AG04449 (cell line): ENCODE measurements at regions of chr6 and their contacts with region 1.

Region 1: GRCh38 chr6:138692058-138692977 is 81.3 kb upstream of the CCDC28A start:
- DNase-seq: no peak
- H3K4me3 ChIP-seq: peak overlapping the region; percentile 73
- CTCF ChIP-seq: peak; percentile 75

Region 2: DNA sequence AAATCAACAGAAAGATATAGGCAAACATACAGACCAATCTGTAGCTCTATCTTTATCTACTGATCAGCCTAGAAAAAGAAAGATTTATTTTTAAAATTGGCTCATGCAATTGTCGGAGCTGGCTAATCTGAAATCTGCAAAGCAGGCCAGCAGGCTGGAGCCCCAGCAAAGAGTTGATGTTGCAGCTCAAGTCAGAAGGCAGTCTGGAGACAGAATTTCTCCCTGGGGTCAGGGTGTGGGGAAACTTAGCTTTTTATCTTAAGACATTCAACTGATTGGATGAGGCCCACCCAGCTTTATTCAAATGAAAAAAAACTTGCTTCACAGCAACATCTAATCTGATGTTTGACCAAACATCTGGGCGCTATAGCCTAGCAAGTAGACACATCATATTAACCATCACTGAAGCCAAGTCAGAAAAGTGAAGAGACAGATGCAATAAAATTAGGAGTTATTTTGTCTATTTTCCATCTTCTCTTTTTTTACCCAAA is 27.6 kb before region 1 on chr6:
- CTCF ChIA-PET with region 1: interaction called, 12 read pairs
- POLR2A ChIA-PET with region 1: no interaction called
- DNase-seq: no peak
- H3K4me3 ChIP-seq: no peak overlapping the region
- CTCF ChIP-seq: no peak

Region 3: DNA sequence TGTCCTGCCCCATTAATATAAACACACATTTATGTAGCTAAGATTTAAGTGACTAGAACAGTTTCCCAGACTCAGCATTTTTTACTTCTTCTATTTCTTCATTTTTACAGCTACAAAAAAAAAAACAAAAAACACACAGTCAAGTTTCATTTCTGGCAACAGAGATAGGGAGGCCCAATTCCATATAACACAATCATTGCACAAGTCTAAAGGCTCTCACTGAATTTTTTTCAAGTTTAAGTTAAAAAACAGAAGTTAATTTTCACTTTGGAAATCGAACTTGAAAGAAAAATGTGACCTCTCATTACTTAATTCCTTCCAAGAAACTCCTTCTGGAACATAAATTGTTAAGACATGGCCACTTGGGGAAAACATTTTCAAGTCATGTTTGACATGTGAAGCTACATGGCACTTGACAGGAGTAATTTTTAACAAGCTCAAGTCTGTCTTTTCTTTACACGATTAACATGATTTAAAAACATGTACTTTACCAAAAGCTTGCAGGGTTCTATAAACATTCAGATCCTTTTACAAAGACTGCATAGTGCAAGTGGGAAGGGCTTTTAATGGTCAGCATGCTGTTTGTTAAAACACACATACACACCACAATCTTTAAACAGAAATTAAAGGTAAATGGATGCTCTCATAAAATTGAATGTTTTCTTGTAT is 18.8 kb before region 1 on chr6:
- CTCF ChIA-PET with region 1: interaction called, 27 read pairs
- POLR2A ChIA-PET with region 1: interaction called, 4 read pairs
- DNase-seq: no peak
- H3K4me3 ChIP-seq: no peak overlapping the region
- CTCF ChIP-seq: no peak

Region 4: DNA sequence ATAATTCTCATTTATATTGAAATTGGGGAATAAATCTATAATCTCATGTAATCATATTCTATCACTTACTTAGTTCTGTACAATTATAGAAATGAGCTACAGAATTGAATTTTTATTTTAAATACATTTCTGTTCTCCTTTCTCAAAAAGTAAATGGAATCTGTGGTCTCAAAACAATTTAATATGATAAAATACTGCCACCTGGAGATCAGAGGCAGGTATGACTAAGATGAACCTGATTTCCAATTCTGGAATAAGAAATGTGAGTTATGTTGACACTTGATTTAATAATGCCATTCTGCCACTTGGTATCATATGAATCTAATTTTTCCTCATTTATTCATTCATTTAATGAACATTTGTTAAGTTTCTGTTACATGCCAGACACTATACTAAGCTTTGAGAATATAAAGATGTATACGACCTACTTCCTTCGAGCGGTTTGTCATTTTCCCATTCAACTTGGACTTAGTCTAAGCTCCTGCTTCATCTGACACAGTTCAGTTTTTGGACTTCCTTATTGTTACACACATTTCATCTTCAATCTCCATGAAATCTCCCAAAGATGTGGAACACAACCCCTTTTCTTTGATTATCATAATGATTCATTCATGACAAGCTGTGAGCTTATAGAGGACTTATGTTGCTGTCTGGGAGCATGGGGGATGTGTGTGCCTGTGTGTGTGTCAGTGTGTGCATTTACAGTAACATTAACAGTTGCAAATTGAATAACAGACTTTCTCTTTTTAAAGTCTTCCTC is 73.8 kb after region 1 on chr6:
- CTCF ChIA-PET with region 1: interaction called, 13 read pairs
- POLR2A ChIA-PET with region 1: no interaction called
- DNase-seq: no peak
- H3K4me3 ChIP-seq: no peak overlapping the region
- CTCF ChIP-seq: peak; percentile 31

Region 5: GRCh38 chr6:138891255-138891986 is 199.1 kb after region 1 on chr6:
- CTCF ChIA-PET with region 1: no interaction called
- POLR2A ChIA-PET with region 1: no interaction called
- DNase-seq: no peak
- H3K4me3 ChIP-seq: no peak overlapping the region
- CTCF ChIP-seq: no peak